HEK293T (cell line): ENCODE measurements at regions of chr11 and their contacts with region 1.

Region 1: GRCh38 chr11:17730608-17731462 is 3.7 kb upstream of the KCNC1 start:
- DNase-seq: peak; percentile 84

Region 2: GRCh38 chr11:17598700-17599459 is 132.0 kb before region 1 on chr11:
- CTCF ChIA-PET with region 1: interaction called, 61 read pairs
- POLR2A ChIA-PET with region 1: no interaction called
- DNase-seq: peak; percentile 84

Region 3: DNA sequence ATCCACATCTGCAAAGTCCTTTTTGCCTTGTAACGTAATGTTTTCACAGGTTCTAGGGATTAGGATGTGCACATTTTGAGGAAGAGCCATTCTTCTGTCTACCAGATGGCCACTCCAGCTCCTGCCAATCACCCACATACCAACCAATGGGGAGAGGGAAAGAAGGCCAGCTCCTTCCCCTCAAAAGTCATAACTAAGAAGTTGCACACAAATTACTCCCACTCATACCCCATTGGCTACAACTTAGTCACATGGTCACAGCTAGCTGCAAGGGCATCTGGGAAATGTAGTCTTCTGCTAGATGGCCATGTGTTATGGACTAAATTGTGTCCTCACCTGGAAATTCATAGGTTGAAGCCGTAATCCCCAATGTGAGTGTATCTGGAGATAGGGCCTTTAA is 26.9 kb before region 1 on chr11:
- CTCF ChIA-PET with region 1: no interaction called
- POLR2A ChIA-PET with region 1: no interaction called
- DNase-seq: peak; percentile 23

Region 4: DNA sequence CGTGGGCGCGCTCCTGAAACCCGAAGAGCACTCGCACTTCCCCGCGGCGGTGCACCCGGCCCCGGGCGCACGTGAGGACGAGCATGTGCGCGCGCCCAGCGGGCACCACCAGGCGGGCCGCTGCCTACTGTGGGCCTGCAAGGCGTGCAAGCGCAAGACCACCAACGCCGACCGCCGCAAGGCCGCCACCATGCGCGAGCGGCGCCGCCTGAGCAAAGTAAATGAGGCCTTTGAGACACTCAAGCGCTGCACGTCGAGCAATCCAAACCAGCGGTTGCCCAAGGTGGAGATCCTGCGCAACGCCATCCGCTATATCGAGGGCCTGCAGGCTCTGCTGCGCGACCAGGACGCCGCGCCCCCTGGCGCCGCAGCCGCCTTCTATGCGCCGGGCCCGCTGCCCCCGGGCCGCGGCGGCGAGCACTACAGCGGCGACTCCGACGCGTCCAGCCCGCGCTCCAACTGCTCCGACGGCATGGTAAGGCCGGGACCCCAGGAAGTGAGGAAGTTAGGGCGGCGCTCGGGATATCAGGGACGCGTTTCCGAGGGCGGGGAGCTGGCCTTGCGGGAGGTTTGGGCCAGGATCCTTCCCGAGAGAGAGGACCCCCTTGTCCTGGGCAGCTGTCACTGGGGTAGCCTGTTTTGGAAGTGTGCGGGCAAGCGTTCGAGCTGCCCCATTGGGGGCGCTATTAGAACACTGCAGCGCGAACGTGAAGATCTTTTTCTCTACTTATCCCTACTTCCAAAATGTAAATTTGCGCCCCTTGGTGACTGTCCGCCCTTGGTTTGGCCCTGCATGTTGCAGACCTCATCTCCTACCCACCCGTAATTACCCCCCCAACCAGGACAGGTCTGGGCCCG is 10.7 kb before region 1 on chr11:
- CTCF ChIA-PET with region 1: interaction called, 16 read pairs
- POLR2A ChIA-PET with region 1: interaction called, 3 read pairs
- DNase-seq: peak; percentile 41

Region 5: GRCh38 chr11:17972987-17973386 is 242.2 kb after region 1 on chr11:
- CTCF ChIA-PET with region 1: interaction called, 44 read pairs
- POLR2A ChIA-PET with region 1: interaction called, 3 read pairs
- DNase-seq: peak; percentile 74

Region 6: DNA sequence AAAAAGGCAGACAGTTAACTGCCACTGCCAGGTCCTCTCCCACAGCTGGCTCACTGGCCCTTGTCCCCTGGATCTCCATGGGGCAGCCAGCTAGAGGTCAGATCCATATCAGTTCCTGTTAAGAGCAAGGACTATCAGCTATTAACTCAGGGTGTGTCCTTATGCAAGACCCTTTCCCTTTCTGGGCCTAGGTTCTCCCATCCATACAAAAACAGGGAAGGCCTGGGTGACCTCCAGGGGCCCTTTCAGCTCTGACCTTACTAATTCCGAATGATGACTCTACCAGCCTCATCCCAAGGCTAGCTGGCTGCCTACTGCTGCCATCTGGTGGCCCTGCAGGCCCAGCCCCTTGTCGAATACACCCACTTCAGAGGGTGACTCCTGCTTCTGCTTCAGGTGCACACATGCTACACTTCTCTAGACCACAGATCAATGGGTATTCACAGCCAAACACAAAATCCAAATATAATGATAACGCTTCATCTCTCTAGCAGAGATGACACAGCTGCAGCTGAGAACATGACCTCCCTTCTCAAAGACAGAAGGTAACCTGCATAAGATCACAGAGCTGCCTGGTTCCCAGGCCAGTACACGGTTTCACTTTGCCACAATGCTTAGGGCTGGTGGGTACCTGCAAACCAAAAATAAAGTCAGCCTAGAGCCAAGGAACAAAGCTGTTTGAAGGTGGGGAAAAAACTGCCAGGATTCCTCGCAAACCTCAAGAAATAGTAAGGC is 247.9 kb after region 1 on chr11:
- CTCF ChIA-PET with region 1: interaction called, 44 read pairs
- POLR2A ChIA-PET with region 1: no interaction called
- DNase-seq: peak; percentile 64